Sciatic nerve (tissue), 2 donors: ENCODE measurements at regions of chr6 and their contacts with region 1.

Region 1: GRCh38 chr6:107662333-107662732 is 161.8 kb downstream of the SCML4 start:
- DNase-seq: no peak
- ATAC-seq: no peak

Region 2: GRCh38 chr6:107832151-107833056 is 170.1 kb after region 1 on chr6:
- intact Hi-C with region 1: loop called (anchors 2 kb)
- DNase-seq: no peak
- ATAC-seq: no peak